ENCODE measurements at regions of chr18 and their contacts with region 1.

Region 1: DNA sequence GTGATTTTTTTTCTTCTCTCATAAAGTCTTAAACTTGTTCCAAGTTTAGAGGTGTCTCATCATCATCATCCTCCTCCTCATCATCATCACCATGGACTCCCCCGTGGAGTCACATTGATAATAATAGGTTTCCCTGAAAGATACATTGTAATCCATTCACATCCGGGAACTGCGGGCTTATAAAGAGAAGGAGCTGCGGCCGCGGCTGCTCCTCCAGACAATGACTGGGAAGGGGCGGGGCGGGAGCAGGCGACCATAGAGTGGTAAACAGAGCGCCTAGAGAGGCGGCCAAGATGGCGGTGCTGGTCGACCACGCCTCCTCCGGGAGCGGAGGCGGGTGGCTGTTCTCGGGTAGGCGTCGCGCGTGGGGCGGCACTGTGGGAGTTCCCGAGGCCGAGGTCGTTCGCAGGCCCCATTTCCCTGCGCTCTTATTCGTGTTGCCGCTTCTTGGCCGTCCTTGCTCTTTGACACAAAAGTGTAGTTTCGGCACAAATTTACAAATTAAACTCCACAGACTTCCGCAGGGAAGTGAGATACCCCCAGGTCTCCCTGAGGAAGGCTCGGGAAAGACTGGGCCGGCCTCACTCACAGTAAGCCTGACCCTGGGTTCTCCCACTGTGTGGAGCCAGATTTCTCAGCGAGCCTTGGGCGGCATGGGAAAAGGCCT is 1.8 kb upstream of the TCF4 start:
- DNase-seq: peak; percentile 97 to 99 (median 97)
- H3K4me3 ChIP-seq: peak overlapping the region; percentile 42
- H3K27ac ChIP-seq: peak overlapping the region; percentile 16 to 79
- H3K4me1 ChIP-seq: no peaks in the 10 kb centered on the region
- H3K27me3 ChIP-seq: no peaks in the 10 kb centered on the region
- CTCF ChIP-seq: no peak
- EP300 ChIP-seq: no peak
- POLR2A ChIP-seq: peak; percentile 42

Region 2: DNA sequence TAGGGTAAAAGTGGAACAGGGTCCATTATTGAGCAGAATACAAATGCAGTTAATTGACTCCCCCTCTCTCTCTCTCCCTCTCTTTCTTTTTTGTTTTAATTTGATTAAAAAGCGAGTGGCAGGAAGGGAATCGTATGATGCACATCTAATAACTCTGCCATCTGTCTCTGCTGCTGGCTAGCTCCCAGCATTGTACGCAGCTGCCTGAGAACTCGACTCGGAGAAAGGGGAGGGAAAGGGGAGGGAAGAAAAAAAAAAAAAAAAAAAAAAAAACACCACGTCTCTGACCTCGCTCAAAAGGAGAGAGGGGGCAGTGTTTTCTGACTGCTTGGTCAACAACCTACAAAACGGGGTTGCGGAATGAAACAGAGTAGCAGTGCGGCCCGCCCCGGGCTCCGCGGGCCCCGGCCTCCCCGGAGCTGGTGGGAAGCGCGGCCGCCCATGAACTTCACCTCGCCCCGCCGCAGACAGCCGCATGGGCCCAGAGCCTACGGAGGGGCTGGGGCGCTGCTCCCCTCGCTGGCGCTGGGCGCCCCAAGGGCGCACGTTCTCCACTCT is 267.5 kb before region 1 on chr18:
- intact Hi-C with region 1: loop called in 1 of 4 experiments (anchors 10 kb)
- DNase-seq: peak; percentile 80 to 90 (median 86)
- H3K4me3 ChIP-seq: peak overlapping the region; percentile 54
- H3K27ac ChIP-seq: peak overlapping the region; percentile 96 to 97
- H3K4me1 ChIP-seq: peaks cover 3% of the 10 kb centered on the region
- H3K27me3 ChIP-seq: no peaks in the 10 kb centered on the region
- CTCF ChIP-seq: peak in 1 of 3 donors; percentile 14
- EP300 ChIP-seq: no peak
- POLR2A ChIP-seq: peak; percentile 45

Region 3: DNA sequence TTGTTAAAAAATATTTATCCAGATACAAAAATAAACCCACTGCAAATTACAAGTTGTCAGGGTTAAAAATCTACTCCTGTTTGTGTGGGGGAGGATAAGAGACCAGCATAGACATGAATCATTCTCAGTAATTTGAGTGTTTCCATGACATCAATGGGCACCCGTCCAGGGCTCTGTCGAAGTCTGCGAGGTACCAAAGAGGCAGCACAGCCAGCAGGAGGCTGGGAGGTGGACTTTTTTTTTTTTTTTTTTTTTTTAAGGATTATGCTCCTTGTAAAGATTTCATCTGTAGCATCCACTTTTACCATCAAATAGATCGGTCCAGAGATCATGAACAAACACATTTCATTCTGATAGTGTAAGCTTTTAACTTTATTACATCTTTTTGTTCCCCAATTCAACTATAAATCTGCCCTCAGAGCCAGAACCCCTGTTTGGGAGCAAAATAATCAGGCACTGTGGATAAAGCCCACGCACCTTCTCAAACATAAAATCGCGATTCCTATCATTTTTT is 183.8 kb before region 1 on chr18:
- intact Hi-C with region 1: loop called in 1 of 4 experiments (anchors 10 kb)
- DNase-seq: peak; percentile 83 to 96 (median 92)
- H3K4me3 ChIP-seq: no peak overlapping the region
- H3K27ac ChIP-seq: peak overlapping the region in 1 of 2 donors; percentile 76
- H3K4me1 ChIP-seq: peaks cover 4% of the 10 kb centered on the region
- H3K27me3 ChIP-seq: no peaks in the 10 kb centered on the region
- CTCF ChIP-seq: no peak
- EP300 ChIP-seq: no peak
- POLR2A ChIP-seq: no peak

Region 4: GRCh38 chr18:55422456-55423180 is 167.1 kb before region 1 on chr18:
- intact Hi-C with region 1: loop called in 3 of 4 experiments (anchors 2 to 10 kb)
- DNase-seq: peak; percentile 51 to 67 (median 63)
- H3K4me3 ChIP-seq: peak overlapping the region; percentile 32
- H3K27ac ChIP-seq: no peak overlapping the region
- H3K4me1 ChIP-seq: peaks cover 2% of the 10 kb centered on the region
- H3K27me3 ChIP-seq: no peaks in the 10 kb centered on the region
- CTCF ChIP-seq: no peak
- EP300 ChIP-seq: no peak
- POLR2A ChIP-seq: no peak